ENCODE measurements at regions of chr15 and their contacts with region 1.

Region 1: GRCh38 chr15:55868707-55869106 is 124.7 kb downstream of the NEDD4 start:
- DNase-seq: no peak
- ATAC-seq: peak; percentile 91 to 93 (median 92)
- H3K4me3 ChIP-seq: peak overlapping the region; percentile 30
- H3K27ac ChIP-seq: peak overlapping the region; percentile 83
- H3K4me1 ChIP-seq: peaks cover 46% of the 10 kb centered on the region
- H3K27me3 ChIP-seq: no peaks in the 10 kb centered on the region
- CTCF ChIP-seq: no peak

Region 2: GRCh38 chr15:55588070-55588814 is 280.5 kb before region 1 on chr15 and contains the start of gene PYGO1:
- intact Hi-C with region 1: no loop called
- DNase-seq: peak; percentile 69 to 83
- ATAC-seq: peak; percentile 75 to 86 (median 82)
- H3K4me3 ChIP-seq: peak within 1 kb of the TSS; percentile 77
- H3K27ac ChIP-seq: peak within 1 kb of the TSS; percentile 96
- H3K4me1 ChIP-seq: peaks cover 2% of the 10 kb centered on the region
- H3K27me3 ChIP-seq: no peaks in the 10 kb centered on the region
- CTCF ChIP-seq: no peak
- total RNA-seq, gene PYGO1: 18.8 to 30.2 (median 28.5) TPM

Region 3: DNA sequence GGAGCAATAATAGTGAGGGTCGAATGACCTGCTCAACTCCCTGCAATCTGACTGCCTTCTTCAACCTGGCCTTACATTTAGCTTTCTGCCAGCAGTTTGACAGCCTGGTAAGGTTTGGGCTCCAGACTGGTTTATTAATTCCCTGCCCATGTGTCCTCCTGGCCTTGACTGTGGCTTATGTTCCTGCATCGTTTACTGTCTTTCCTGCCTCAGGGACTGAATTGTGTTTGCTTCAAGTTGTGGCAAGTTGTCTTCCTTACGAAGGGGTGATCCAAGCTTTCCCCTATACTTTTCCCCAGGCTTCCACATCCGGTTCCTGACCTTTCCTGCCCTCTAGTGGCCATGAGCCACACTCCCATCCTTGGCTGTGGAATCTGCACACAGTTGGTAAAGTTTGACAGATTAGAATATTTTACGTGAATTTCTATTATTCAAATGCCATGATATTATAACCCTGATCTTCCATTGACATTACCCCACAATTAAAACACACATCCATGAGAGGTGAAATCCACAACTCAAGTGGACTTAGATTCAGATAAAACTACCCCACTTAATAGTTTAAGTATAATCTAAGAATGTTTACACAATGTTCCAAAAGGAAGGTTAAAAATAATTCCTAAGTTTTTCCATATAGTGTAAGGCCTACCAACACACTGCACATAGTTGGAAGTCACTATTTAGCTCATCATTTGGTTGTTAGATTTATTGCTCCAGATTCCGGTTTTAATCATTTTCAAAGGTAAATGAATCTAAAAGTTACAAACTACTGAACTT is 29.0 kb after region 1 on chr15:
- intact Hi-C with region 1: loop called in 1 of 2 experiments (anchors 1 kb)
- DNase-seq: peak; percentile 47 to 63
- ATAC-seq: peak; percentile 78 to 85 (median 81)
- H3K4me3 ChIP-seq: peak overlapping the region; percentile 63
- H3K27ac ChIP-seq: peak overlapping the region; percentile 94
- H3K4me1 ChIP-seq: peaks cover 55% of the 10 kb centered on the region
- H3K27me3 ChIP-seq: no peaks in the 10 kb centered on the region
- CTCF ChIP-seq: peak; percentile 80

Region 4: DNA sequence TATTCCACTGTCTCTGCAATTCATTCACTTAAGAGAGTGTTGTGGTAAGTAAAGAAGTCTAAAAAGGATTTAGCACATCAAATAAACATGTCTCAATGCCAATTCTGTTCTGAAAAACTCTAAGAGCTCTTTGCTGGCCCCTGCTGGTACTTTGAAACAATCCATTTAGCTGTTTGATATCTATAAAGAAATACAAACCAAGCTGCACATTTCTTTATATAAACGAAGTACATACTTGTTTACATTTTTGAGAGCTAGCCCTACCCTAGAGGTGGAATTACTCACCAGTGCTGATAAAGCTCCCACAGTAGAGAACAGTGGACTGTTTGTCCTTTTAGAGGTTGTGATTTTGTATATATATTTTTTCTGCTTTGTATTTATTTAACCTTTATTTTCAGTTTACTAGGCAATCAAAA is 49.2 kb after region 1 on chr15:
- intact Hi-C with region 1: loop called in 1 of 2 experiments (anchors 5 kb)
- DNase-seq: no peak
- ATAC-seq: peak; percentile 29 to 72 (median 55)
- H3K4me3 ChIP-seq: peak overlapping the region; percentile 68
- H3K27ac ChIP-seq: peak overlapping the region; percentile 82
- H3K4me1 ChIP-seq: no peaks in the 10 kb centered on the region
- H3K27me3 ChIP-seq: no peaks in the 10 kb centered on the region
- CTCF ChIP-seq: peak; percentile 73

Region 5: GRCh38 chr15:55993111-55993803 is 124.5 kb after region 1 on chr15 and contains the start of gene NEDD4:
- intact Hi-C with region 1: loop called in 1 of 2 experiments (anchors 5 kb)
- DNase-seq: peak; percentile 89 to 92
- ATAC-seq: peak; percentile 93 to 95 (median 94)
- H3K4me3 ChIP-seq: peak within 1 kb of the TSS; percentile 82
- H3K27ac ChIP-seq: peak within 1 kb of the TSS; percentile 83
- H3K4me1 ChIP-seq: peaks cover 16% of the 10 kb centered on the region
- H3K27me3 ChIP-seq: no peaks in the 10 kb centered on the region
- CTCF ChIP-seq: peak; percentile 59
- total RNA-seq, gene NEDD4: 39.1 to 145 (median 82.1) TPM

Measured in psoas muscle (tissue), 8 donors.